H1 (cell line): ENCODE measurements at regions of chr7 and their contacts with region 1.

Region 1: DNA sequence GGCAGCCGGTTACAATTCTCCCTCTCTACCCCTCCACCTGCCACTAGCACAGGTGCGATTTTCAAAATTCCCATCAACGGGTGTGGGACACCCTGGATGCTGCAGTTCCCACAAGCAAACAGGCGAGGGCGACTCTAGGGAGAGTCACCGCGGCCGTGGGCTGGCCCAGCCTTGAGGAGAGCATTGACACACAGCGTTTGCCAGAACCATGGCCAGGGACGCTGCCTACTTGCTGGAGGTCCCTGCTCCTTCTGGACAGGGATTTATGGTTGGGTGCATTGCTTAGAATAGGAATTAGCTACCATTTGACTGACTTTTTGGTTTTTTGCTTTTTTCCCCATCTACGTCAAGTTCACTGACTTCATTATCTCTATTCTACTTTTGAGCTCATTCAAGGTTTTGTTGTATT is 19.0 kb upstream of the CLDN4 start:
- DNase-seq: peak; percentile 56 to 92
- H3K4me3 ChIP-seq: no peak overlapping the region
- H3K27ac ChIP-seq: no peak overlapping the region
- H3K4me1 ChIP-seq: peaks cover 0 to 9% (median 5%) of the 10 kb centered on the region in 4 experiments; a peak in 6 of 7 replicates
- H3K27me3 ChIP-seq: no peaks in the 10 kb centered on the region
- CTCF ChIP-seq: peak; percentile 90 to 97 (median 91)
- EP300 ChIP-seq: no peak
- POLR2A ChIP-seq: no peak
- RAD21 ChIP-seq: peak; percentile 89 to 92

Region 2: DNA sequence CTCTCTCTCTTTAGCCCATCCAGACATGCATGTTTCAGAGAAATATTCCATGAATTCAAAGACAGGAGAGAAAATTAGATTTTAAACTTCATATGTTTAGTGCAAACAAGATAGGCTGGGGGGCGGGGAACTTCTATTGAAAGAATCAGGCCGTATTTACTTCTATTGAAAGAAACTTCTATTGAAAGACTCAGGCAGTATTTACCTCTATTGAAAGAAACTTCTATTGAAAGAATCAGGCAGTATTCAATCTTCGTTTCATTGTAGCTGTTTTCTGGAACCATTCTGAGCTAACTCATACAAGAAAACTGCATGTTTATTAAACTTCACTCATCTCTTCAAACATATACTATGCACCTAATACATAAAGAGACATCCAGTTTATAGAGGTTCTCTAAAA is 1106.9 kb before region 1 on chr7:
- CTCF ChIA-PET with region 1: no interaction called
- POLR2A ChIA-PET with region 1: no interaction called
- DNase-seq: no peak
- H3K4me3 ChIP-seq: no peak overlapping the region
- H3K27ac ChIP-seq: no peak overlapping the region
- H3K4me1 ChIP-seq: no peaks in the 10 kb centered on the region; a peak in 1 of 7 replicates
- H3K27me3 ChIP-seq: no peaks in the 10 kb centered on the region
- CTCF ChIP-seq: no peak
- EP300 ChIP-seq: no peak
- POLR2A ChIP-seq: no peak
- RAD21 ChIP-seq: no peak

Region 3: DNA sequence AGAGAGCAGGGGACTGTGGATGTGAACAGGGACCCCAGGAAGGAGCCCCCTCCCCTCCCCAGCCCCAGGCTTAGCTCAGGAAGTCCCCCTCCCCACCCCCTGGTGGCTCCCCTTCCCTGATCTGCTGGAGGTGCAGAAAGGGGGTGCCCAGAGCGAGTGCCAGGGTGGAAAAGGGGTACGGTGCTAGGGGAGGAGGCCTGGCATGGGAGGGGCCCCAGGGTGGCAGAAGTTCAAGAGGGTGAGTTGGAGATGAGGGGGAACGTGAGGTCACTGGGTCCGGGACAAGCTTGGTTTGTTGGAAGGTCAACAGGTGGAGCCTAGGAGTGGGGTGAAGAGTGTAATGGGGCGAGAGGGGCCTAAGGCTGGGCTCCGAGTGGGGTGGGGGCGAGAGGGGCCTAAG is 211.8 kb before region 1 on chr7:
- CTCF ChIA-PET with region 1: no interaction called
- POLR2A ChIA-PET with region 1: no interaction called
- DNase-seq: no peak
- H3K4me3 ChIP-seq: no peak overlapping the region
- H3K27ac ChIP-seq: no peak overlapping the region
- H3K4me1 ChIP-seq: peaks cover 0 to 14% (median 4%) of the 10 kb centered on the region in 4 experiments; a peak in 6 of 7 replicates
- H3K27me3 ChIP-seq: no peaks in the 10 kb centered on the region
- CTCF ChIP-seq: no peak
- EP300 ChIP-seq: no peak
- POLR2A ChIP-seq: no peak
- RAD21 ChIP-seq: no peak

Region 4: DNA sequence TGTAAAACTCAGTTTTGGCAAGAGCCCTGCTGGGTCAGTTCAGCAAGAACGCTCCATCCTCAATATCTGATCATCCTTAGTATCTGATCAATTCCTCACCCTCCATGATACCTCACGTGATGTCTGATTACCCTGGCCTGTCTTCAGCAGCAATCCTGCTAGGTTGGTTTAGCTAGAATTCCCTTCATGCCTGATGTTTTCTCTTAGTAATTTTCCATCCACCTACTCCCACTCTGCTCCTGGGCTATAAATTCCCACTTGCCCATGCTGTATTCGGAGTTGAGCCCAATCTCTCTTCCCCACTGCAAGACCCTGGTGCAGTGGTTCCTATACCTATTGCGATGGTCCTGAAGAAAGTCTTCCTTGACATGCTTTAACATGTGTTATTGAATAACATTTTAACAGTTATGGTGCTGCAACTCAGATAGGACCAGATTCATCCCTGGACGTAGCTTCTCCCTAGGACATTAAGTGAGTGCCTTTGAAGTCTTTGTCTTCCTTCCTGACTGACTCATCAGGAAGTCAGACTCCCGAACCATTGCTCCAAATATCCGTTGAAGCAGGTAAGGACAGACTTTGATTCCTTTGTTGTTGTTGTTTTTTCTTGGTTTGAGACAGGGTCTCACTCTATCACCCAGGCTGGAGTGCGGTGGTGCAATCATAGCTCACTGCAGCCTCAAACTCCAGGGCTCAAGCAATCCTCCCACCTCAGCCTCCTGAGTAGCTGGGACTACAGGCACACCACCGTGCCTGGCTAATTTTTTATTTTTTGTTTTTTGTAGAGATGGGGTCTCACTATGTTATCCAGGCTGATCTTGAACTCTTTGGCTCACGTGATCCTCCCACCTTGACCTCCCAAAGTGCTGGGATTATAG is 12.3 kb before region 1 on chr7:
- CTCF ChIA-PET with region 1: interaction called, 16 read pairs
- POLR2A ChIA-PET with region 1: interaction called, 3 read pairs
- DNase-seq: peak in 1 of 2 experiments; percentile 39
- H3K4me3 ChIP-seq: no peak overlapping the region
- H3K27ac ChIP-seq: no peak overlapping the region
- H3K4me1 ChIP-seq: peaks cover 0 to 6% (median 0%) of the 10 kb centered on the region in 4 experiments; a peak in 1 of 7 replicates
- H3K27me3 ChIP-seq: no peaks in the 10 kb centered on the region
- CTCF ChIP-seq: no peak
- EP300 ChIP-seq: no peak
- POLR2A ChIP-seq: no peak
- RAD21 ChIP-seq: no peak

Region 5: DNA sequence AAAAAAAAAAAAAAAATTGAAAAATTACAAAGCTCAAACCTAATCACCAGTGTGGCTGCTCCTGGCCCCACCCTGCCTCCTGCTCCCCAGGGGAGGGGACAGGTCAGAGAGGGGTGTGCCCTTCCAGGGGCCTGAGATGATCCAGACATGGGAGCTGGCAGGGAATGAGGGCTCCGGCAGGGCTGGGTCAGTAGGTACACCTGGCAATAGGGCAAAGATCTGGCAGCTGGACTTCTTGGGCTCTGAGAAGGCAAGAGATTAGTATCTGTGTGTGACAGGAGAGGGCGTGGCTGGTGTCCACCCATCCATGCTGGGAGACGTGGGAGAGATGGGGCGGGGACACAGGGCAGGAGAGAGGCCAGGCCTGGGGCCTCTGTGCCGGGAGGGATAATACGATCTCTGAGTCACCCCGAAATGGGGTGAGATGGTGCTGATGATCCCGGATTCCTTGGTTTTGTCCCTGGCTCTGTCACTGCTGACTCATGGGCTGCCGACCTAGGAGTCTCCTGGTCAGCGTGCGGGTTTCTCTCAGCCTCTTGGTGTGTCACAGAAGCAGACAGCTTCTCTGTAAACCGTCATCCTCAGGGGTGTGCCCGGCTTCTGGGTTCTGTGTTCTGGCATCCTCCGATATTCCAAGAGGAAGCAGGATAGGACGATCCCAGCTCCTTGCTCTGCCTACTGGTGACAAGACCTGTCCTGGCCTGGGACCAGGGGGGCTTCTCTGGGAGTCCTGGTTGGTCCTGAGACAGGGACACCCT is 10.7 kb after region 1 on chr7:
- CTCF ChIA-PET with region 1: interaction called, 35 read pairs
- POLR2A ChIA-PET with region 1: interaction called, 14 read pairs
- DNase-seq: no peak
- H3K4me3 ChIP-seq: no peak overlapping the region
- H3K27ac ChIP-seq: no peak overlapping the region
- H3K4me1 ChIP-seq: peaks cover 2 to 5% (median 3%) of the 10 kb centered on the region in 4 experiments
- H3K27me3 ChIP-seq: peaks cover 0 to 5% (median 0%) of the 10 kb centered on the region in 4 experiments; a peak in 1 of 7 replicates
- CTCF ChIP-seq: no peak
- EP300 ChIP-seq: no peak
- POLR2A ChIP-seq: no peak
- RAD21 ChIP-seq: no peak

Region 6: DNA sequence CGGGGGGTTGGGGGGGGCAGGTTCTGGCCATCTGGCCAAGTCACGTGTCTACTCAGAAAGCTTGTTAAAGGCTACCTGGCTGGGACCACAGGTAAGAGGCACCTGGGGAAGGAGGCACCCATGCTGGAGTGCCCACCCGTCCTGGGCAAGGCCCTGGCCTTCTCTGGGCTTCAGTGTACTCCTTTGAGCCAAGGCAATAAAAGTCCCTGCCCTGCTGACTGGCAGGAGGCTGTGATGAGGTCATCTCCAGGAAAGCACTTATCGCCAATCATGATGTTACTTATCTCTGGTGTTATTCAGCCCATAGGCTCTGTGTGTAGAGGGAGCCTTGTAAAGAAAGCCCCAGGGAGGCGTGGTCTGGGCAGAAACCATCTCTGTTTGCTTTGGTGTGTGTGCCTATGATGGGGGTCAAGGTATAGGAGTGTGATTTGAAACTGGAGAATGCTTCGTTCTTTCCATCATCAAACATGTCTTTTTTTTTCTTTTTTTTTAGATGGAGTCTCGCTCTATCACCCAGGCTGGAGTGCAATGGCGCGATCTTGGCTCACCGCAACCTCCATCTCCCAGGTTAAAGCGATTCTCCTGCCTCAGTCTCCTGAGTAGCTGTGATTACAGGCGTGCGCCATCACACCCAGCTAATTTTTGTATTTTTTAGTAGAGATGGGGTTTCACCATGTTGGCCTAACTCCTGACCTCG is 16.5 kb after region 1 on chr7:
- CTCF ChIA-PET with region 1: interaction called, 52 read pairs
- POLR2A ChIA-PET with region 1: interaction called, 72 read pairs
- DNase-seq: no peak
- H3K4me3 ChIP-seq: no peak overlapping the region
- H3K27ac ChIP-seq: no peak overlapping the region; the same call in 1 of the 2 replicates
- H3K4me1 ChIP-seq: peaks cover 22 to 52% (median 39%) of the 10 kb centered on the region in 4 experiments
- H3K27me3 ChIP-seq: peaks cover 0 to 4% (median 0%) of the 10 kb centered on the region in 4 experiments; a peak in 2 of 7 replicates
- CTCF ChIP-seq: no peak
- EP300 ChIP-seq: no peak
- POLR2A ChIP-seq: 0 out of 3 replicates have a peak, but pooled peaks of 1 of the 2 experiments have one; percentile 28
- RAD21 ChIP-seq: no peak

Region 7: DNA sequence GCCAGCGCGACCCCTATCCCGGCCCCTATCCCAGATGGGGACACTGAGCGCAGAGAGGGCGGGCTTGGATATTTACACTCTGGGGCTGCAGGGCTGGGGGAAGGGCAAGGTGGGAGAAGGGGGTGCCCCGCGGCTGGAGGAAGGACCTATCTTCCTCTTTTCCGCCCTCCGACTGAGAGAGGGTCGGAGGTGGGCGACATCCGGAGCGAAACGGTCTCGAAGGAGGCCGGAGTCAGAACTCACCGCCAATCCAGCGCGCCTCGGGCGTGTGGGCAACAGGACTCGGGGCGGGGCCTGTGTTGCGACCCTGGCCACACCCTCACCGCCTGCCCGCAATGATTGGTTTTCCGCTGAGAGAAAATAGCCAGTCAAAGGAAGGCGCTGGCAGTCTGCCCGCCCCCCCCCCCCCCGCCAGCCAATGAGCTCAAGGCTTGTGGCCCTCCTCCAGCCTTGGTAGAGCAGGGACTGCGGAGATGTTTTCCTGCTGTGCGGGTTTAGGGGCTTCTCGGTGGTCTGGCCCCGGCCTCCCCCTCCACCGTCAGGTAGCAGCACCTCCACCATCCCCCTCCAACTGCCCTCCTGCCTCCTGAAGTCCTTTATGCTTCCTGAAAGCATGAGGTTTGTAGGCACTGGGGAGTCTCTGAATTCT is 30.6 kb after region 1 on chr7 and contains the start of gene METTL27:
- CTCF ChIA-PET with region 1: interaction called, 61 read pairs
- POLR2A ChIA-PET with region 1: interaction called, 7 read pairs
- DNase-seq: peak; percentile 82 to 91
- H3K4me3 ChIP-seq: peak within 1 kb of the TSS; percentile 52 to 78 (median 58)
- H3K27ac ChIP-seq: 0 out of 2 replicates have a peak within 1 kb of the TSS, but pooled peaks have one; percentile 61
- H3K4me1 ChIP-seq: peaks cover 0 to 11% (median 5%) of the 10 kb centered on the region in 4 experiments; a peak in 5 of 7 replicates
- H3K27me3 ChIP-seq: no peaks in the 10 kb centered on the region
- CTCF ChIP-seq: no peak
- EP300 ChIP-seq: no peak
- POLR2A ChIP-seq: peak in 1 of 2 experiments; percentile 61; a peak in 2 of 3 replicates
- RAD21 ChIP-seq: no peak
- total RNA-seq, gene METTL27: 5.6 and 6.2 TPM in 2 replicates

Region 8: GRCh38 chr7:73851410-73852234 is 39.9 kb after region 1 on chr7:
- CTCF ChIA-PET with region 1: interaction called, 72 read pairs
- POLR2A ChIA-PET with region 1: interaction called, 6 read pairs
- DNase-seq: no peak
- H3K4me3 ChIP-seq: no peak overlapping the region
- H3K27ac ChIP-seq: no peak overlapping the region
- H3K4me1 ChIP-seq: 0 out of 7 replicates have a peak, but pooled peaks cover 0 to 2% (median 0%) of the 10 kb centered on the region in 4 experiments
- H3K27me3 ChIP-seq: peaks cover 0 to 3% (median 0%) of the 10 kb centered on the region in 4 experiments; a peak in 3 of 7 replicates
- CTCF ChIP-seq: no peak
- EP300 ChIP-seq: no peak
- POLR2A ChIP-seq: no peak
- RAD21 ChIP-seq: no peak

Region 9: GRCh38 chr7:74012842-74013249 is 201.1 kb after region 1 on chr7:
- CTCF ChIA-PET with region 1: no interaction called
- POLR2A ChIA-PET with region 1: no interaction called
- DNase-seq: no peak
- H3K4me3 ChIP-seq: no peak overlapping the region
- H3K27ac ChIP-seq: no peak overlapping the region
- H3K4me1 ChIP-seq: no peaks in the 10 kb centered on the region
- H3K27me3 ChIP-seq: no peaks in the 10 kb centered on the region
- CTCF ChIP-seq: no peak
- EP300 ChIP-seq: no peak
- POLR2A ChIP-seq: no peak
- RAD21 ChIP-seq: no peak